ENCODE measurements at regions of chr6 and their contacts with region 1.

Region 1: DNA sequence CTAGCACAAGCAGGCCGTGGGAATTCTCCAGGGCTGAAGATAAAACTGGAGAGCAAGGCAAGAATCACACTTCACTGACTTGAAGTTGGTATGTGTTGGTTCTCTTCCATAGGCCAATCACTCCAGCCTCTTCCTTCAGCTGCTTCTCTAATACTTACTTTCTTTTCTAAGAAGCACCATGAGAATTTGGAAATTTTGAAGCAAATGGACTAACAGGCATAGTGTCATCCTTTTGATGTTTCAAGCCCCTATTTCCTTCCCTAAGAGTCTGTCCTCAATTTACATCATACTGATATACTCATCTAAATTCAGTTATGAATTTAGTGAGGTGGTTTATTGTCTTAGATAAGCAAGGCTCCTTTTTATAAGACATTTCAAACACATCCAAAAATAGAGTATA is 24.0 kb downstream of the SLC26A8 start:
- DNase-seq: no peak
- ATAC-seq: no peak
- H3K4me3 Mint-ChIP-seq: no peak overlapping the region
- H3K27ac Mint-ChIP-seq: no peak overlapping the region
- H3K4me1 Mint-ChIP-seq: no peaks in the 10 kb centered on the region
- H3K27me3 Mint-ChIP-seq: no peaks in the 10 kb centered on the region
- CTCF ChIP-seq: no peak

Region 2: GRCh38 chr6:35893246-35893645 is 107.2 kb before region 1 on chr6:
- CTCF ChIA-PET with region 1: no interaction called
- POLR2A ChIA-PET with region 1: interaction called, 10 read pairs
- DNase-seq: no peak
- ATAC-seq: no peak
- H3K4me3 Mint-ChIP-seq: no peak overlapping the region
- H3K27ac Mint-ChIP-seq: peak overlapping the region; percentile 58
- H3K4me1 Mint-ChIP-seq: peaks cover 26% of the 10 kb centered on the region
- H3K27me3 Mint-ChIP-seq: no peaks in the 10 kb centered on the region
- CTCF ChIP-seq: no peak

Region 3: GRCh38 chr6:35955976-35956375 is 44.5 kb before region 1 on chr6:
- CTCF ChIA-PET with region 1: no interaction called
- POLR2A ChIA-PET with region 1: no interaction called
- DNase-seq: no peak
- ATAC-seq: no peak
- H3K4me3 Mint-ChIP-seq: no peak overlapping the region
- H3K27ac Mint-ChIP-seq: no peak overlapping the region
- H3K4me1 Mint-ChIP-seq: peaks cover 4% of the 10 kb centered on the region
- H3K27me3 Mint-ChIP-seq: no peaks in the 10 kb centered on the region
- CTCF ChIP-seq: no peak

Measured in WTC11 (cell line).